ENCODE measurements at regions of chr1 and their contacts with region 1.

Region 1: GRCh38 chr1:204257954-204258752 is 44.4 kb upstream of the GOLT1A start:
- DNase-seq: peak; percentile 20
- H3K4me3 ChIP-seq: no peak overlapping the region
- H3K27ac ChIP-seq: no peak overlapping the region
- H3K27me3 ChIP-seq: no peaks in the 10 kb centered on the region
- CTCF ChIP-seq: peak; percentile 89

Region 2: DNA sequence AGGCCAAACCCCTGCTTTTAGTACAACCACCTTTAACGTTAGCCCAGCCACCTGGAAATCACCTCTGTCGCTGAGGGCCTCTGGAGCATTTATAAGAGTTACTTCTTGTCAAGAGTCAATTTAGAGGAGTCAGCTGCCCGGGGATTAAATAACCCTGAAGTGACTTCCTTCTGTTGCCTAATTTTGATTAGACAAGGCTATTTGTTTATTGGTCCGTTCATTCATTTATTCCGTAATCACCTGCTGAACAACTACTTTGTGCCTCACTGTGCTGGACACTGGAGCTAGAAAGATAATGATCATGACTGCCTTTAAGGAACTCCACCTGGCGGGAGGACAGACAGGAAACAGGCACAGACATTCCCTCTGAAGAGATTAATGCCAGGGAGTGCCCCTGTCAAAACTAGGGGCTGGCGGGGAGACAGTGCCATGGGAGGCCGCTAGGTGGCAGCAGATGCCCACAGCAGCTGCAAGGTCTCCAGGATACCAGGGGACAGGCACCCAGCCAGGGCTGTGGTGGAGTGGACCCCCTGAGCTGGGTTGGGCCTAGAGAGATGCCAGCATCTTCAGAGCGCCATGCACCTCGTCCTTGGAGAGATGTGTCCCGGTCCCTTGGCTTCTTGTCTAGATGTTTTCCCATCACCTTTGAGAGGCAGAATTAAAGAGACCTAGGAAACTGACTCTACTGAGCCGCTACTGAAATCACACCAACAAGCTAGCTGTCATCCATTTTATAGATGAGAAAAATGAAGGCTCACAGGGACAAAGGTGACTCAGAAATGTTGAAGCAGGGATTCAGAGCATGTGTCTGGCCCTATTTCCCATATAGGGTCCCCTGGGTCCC is 95.7 kb before region 1 on chr1:
- CTCF ChIA-PET with region 1: interaction called, 12 read pairs
- POLR2A ChIA-PET with region 1: no interaction called
- DNase-seq: no peak
- H3K4me3 ChIP-seq: no peak overlapping the region
- H3K27ac ChIP-seq: no peak overlapping the region
- H3K27me3 ChIP-seq: peaks cover 6% of the 10 kb centered on the region
- CTCF ChIP-seq: peak; percentile 100

Region 3: DNA sequence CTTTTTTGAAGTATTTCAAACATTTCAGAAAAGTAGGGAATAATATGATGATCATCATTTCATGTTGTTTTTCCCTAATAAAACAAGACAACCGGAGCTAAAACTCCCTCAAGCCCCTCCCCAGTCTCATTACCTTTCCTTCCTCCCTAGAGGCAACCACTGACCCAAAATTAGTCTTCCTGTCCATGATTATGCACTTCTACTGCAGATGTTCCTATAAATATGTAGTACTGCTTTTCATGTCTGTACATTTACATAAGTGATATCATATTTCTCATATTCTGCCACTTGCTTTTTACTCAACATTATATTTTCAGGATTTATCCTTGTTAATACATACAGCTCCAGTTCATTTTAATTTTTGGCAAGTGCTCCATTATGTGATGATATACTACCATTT is 14.4 kb after region 1 on chr1:
- CTCF ChIA-PET with region 1: interaction called, 13 read pairs
- POLR2A ChIA-PET with region 1: no interaction called
- DNase-seq: no peak
- H3K4me3 ChIP-seq: no peak overlapping the region
- H3K27ac ChIP-seq: no peak overlapping the region
- H3K27me3 ChIP-seq: peaks cover 8% of the 10 kb centered on the region
- CTCF ChIP-seq: no peak

Region 4: DNA sequence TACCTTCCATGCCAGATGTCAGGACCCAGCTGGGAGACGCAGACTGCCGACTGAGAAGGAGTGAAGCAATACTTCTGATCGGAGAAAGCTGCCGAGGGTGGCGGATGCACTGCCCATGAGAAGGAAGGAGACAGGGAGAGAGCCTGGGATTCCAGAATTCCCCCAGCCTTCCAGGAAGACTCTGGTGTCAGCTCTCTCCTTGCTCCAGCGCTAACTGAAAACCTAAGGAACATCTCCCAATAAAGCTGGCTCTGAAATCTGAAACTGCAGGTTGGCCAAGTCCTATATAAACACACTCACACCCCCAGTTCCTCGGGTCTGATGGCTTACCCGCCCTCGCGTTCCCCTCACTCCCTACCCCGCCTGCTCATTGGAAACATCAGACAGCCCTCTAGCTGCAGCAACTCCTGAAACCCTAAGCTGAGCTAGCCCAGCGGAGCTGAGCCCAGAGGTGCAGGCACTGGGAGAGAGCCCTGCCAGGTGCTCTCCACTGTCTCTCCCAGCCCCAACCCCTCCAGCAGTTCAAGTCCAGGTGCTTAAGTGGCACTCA is 49.3 kb after region 1 on chr1:
- CTCF ChIA-PET with region 1: interaction called, 10 read pairs
- POLR2A ChIA-PET with region 1: no interaction called
- DNase-seq: no peak
- H3K4me3 ChIP-seq: peak overlapping the region; percentile 56
- H3K27ac ChIP-seq: peak overlapping the region; percentile 58
- H3K27me3 ChIP-seq: no peaks in the 10 kb centered on the region
- CTCF ChIP-seq: peak; percentile 44

Region 5: DNA sequence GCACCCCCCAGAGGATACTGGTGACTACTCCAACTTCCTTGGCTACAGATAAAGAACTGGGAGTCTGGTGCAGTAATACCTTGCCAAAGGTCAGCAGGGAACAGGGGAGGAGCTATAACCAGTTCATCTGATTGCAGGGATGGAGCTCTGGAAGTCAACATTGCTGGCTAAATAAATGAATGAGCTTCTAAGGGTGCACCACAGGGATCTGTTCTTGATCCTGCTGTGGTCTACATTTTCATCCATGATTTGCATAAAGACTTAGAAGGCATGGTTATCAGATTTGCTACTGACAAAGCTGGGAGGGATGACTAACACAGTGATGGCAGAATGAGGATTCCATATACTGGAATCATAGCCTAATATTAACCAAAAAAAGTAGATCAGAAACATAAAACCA is 83.2 kb after region 1 on chr1:
- CTCF ChIA-PET with region 1: interaction called, 19 read pairs
- POLR2A ChIA-PET with region 1: interaction called, 4 read pairs
- DNase-seq: no peak
- H3K4me3 ChIP-seq: no peak overlapping the region
- H3K27ac ChIP-seq: no peak overlapping the region
- H3K27me3 ChIP-seq: peaks cover 3% of the 10 kb centered on the region
- CTCF ChIP-seq: no peak

Measured in AG04450 (cell line).